ENCODE measurements at regions of chr4 and their contacts with region 1.

Region 1: GRCh38 chr4:183261953-183262775 is 57.9 kb downstream of the CLDN22 start:
- DNase-seq: peak; percentile 47 to 67
- ATAC-seq: peak; percentile 95 to 96
- H3K4me3 ChIP-seq: no peak overlapping the region
- H3K27ac ChIP-seq: peak overlapping the region; percentile 12 to 65; a peak in 2 of 6 replicates
- H3K4me1 ChIP-seq: peaks cover 16% of the 10 kb centered on the region
- CTCF ChIP-seq: peak; percentile 61
- EP300 ChIP-seq: no peak
- POLR2A ChIP-seq: no peak
- RAD21 ChIP-seq: peak; percentile 70 to 81

Region 2: GRCh38 chr4:182938205-182938645 is 323.9 kb before region 1 on chr4:
- CTCF ChIA-PET with region 1: interaction called, 86 read pairs
- POLR2A ChIA-PET with region 1: no interaction called
- DNase-seq: peak; percentile 58 to 66
- ATAC-seq: peak; percentile 98 to 100
- H3K4me3 ChIP-seq: no peak overlapping the region
- H3K27ac ChIP-seq: peak overlapping the region in 1 of 2 experiments; percentile 39; a peak in 2 of 6 replicates
- H3K4me1 ChIP-seq: no peaks in the 10 kb centered on the region
- CTCF ChIP-seq: peak; percentile 73
- EP300 ChIP-seq: no peak
- POLR2A ChIP-seq: no peak
- RAD21 ChIP-seq: peak; percentile 90 to 91

Region 3: GRCh38 chr4:183068502-183068901 is 193.7 kb before region 1 on chr4:
- CTCF ChIA-PET with region 1: interaction called, 168 read pairs
- POLR2A ChIA-PET with region 1: no interaction called
- DNase-seq: no peak
- ATAC-seq: no peak
- H3K4me3 ChIP-seq: no peak overlapping the region
- H3K27ac ChIP-seq: no peak overlapping the region
- H3K4me1 ChIP-seq: no peaks in the 10 kb centered on the region
- CTCF ChIP-seq: no peak
- EP300 ChIP-seq: no peak
- POLR2A ChIP-seq: no peak
- RAD21 ChIP-seq: no peak

Region 4: GRCh38 chr4:183080372-183081115 is 181.6 kb before region 1 on chr4:
- CTCF ChIA-PET with region 1: interaction called, 168 read pairs
- POLR2A ChIA-PET with region 1: no interaction called
- DNase-seq: no peak
- ATAC-seq: no peak
- H3K4me3 ChIP-seq: no peak overlapping the region
- H3K27ac ChIP-seq: no peak overlapping the region
- H3K4me1 ChIP-seq: peaks cover 7% of the 10 kb centered on the region; the same call in 1 of the 3 replicates
- CTCF ChIP-seq: no peak
- EP300 ChIP-seq: no peak
- POLR2A ChIP-seq: no peak
- RAD21 ChIP-seq: no peak

Region 5: DNA sequence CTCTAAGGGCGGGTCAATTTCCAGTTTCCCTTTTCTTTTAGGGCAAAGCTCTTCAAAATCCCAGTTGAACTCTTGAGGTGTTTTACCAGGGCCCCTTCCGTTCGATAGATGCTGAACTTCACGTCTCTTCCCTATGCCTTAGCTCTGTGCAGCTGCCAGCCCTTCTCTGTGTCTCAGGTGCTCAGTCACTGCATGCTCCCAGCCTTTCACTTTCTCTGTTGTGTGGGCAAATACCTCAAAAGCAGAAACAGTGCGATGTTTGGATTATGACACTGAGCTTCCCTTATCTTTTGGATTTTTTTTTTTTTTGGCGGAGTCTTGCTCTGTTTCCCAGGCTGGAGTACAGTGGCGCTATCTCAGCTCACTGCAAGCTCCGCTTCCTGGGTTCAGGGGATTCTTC is 50.6 kb before region 1 on chr4:
- CTCF ChIA-PET with region 1: no interaction called
- POLR2A ChIA-PET with region 1: no interaction called
- DNase-seq: no peak
- ATAC-seq: no peak
- H3K4me3 ChIP-seq: no peak overlapping the region
- H3K27ac ChIP-seq: no peak overlapping the region
- H3K4me1 ChIP-seq: no peaks in the 10 kb centered on the region
- CTCF ChIP-seq: no peak
- EP300 ChIP-seq: no peak
- POLR2A ChIP-seq: no peak
- RAD21 ChIP-seq: no peak

Region 6: DNA sequence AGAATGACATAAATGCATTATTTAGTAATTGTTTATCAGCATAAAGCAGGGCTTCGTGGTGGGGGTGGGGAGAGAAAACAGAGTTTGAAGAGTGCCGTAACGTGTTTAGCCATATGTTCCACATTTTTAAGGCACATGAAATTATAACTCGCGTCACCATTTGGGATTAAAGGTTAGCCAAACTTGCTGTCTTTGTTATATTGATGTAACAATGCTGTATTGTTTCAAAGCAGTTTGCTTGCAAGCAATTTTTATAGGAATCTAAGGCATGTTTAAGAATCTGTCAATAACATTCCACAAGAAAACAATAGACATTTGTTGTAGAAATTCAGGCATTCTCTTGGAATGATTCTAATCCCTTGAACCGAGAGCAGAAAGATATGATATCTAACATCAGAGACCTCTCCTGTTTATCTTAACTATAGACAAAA is 20.4 kb before region 1 on chr4:
- CTCF ChIA-PET with region 1: interaction called, 11 read pairs
- POLR2A ChIA-PET with region 1: no interaction called
- DNase-seq: no peak
- ATAC-seq: no peak
- H3K4me3 ChIP-seq: no peak overlapping the region
- H3K27ac ChIP-seq: no peak overlapping the region; a peak in 1 of 6 replicates
- H3K4me1 ChIP-seq: peaks cover 24% of the 10 kb centered on the region
- CTCF ChIP-seq: no peak
- EP300 ChIP-seq: no peak
- POLR2A ChIP-seq: no peak
- RAD21 ChIP-seq: no peak

Region 7: GRCh38 chr4:183272384-183272783 is 10.2 kb after region 1 on chr4:
- CTCF ChIA-PET with region 1: interaction called, 32 read pairs
- POLR2A ChIA-PET with region 1: no interaction called
- DNase-seq: no peak
- ATAC-seq: no peak
- H3K4me3 ChIP-seq: no peak overlapping the region
- H3K27ac ChIP-seq: no peak overlapping the region
- H3K4me1 ChIP-seq: no peaks in the 10 kb centered on the region
- CTCF ChIP-seq: no peak
- EP300 ChIP-seq: no peak
- POLR2A ChIP-seq: no peak
- RAD21 ChIP-seq: no peak

Region 8: DNA sequence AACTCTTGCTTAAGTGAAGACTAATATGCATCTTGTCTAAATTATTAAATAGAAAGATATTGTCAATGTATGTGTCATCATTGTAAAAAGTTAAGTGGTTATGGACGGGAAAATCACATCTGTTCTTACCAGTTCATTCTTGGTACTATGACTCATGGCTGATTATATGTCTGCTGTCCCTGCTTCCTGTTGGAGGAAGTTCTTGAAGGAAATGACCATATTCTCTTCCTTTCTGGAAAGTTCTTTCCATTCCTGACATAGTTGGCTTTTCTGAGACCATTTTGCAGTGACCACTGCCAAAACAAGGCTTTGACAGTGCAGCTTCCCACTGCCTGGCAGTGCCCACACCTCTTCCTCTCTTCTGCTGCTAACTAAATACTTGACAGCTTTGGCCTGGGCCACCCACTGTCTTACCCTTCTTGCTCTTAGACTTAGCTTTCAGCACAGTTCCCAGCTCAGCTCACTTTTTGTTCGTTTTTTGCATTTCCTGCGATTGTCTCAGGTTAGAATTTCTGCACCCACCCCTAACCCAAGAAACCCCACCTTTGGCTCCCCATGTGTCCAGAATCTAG is 73.3 kb after region 1 on chr4:
- CTCF ChIA-PET with region 1: no interaction called
- POLR2A ChIA-PET with region 1: no interaction called
- DNase-seq: peak; percentile 8 to 63
- ATAC-seq: peak in 1 of 2 experiments; percentile 49; a peak in 2 of 6 replicates
- H3K4me3 ChIP-seq: no peak overlapping the region
- H3K27ac ChIP-seq: peak overlapping the region; percentile 76 to 86
- H3K4me1 ChIP-seq: peaks cover 32% of the 10 kb centered on the region
- CTCF ChIP-seq: no peak
- EP300 ChIP-seq: no peak
- POLR2A ChIP-seq: no peak
- RAD21 ChIP-seq: no peak

Measured in A549 (cell line).